ENCODE measurements at regions of chr20 and their contacts with region 1.

Region 1: DNA sequence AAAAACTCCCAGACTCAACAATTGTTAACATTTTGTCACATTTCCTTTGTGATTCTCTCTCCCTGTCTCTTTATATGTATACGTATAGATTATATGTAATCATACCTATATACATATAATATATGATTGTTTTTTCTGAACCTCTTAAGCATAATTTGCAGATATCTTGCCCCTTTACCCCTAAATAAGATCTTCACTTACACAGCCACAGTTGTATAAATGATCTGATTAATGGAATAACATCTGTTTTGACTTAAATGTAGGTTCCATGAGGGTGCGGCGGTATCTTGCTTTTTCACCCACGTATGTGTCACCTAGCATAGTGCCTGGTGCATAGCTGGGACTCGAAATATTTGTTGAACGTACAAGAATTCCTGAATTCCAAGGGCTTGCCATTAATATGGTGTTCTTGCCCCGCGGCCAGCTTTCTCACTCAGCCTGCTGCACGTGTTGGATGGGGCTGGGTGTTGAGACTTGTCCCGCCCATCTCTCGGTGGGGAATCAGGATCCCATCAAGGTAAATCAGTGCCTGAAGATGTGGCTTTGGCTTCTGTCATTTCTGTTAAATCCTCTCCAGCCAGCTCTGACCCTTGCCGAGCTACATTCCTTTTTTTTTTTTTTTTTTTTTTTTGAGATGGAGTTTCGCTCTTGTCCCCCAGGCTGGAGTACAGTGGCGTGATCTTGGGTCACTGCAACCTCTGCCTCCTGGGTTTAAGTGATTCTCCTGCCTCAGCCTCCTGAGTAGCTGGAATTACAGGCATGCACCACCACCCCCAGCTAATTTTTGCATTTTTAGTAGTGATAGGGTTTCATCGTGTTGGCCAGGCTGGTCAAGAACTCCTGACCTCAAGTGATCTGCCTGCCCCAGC is 10.3 kb upstream of the MANBAL start:
- DNase-seq: no peak
- ATAC-seq: no peak
- H3K4me3 ChIP-seq: no peak overlapping the region
- H3K4me3 Mint-ChIP-seq: no peak overlapping the region
- H3K27ac ChIP-seq: no peak overlapping the region
- H3K27ac Mint-ChIP-seq: no peak overlapping the region
- H3K4me1 ChIP-seq: peaks cover 0 to 6% of the 10 kb centered on the region in 2 experiments
- H3K4me1 Mint-ChIP-seq: peaks cover 7 to 11% (median 11%) of the 10 kb centered on the region in 3 donors
- H3K27me3 ChIP-seq: peaks cover 0 to 16% of the 10 kb centered on the region in 2 experiments
- H3K27me3 Mint-ChIP-seq: peaks cover 0 to 3% of the 10 kb centered on the region in 2 donors

Region 2: DNA sequence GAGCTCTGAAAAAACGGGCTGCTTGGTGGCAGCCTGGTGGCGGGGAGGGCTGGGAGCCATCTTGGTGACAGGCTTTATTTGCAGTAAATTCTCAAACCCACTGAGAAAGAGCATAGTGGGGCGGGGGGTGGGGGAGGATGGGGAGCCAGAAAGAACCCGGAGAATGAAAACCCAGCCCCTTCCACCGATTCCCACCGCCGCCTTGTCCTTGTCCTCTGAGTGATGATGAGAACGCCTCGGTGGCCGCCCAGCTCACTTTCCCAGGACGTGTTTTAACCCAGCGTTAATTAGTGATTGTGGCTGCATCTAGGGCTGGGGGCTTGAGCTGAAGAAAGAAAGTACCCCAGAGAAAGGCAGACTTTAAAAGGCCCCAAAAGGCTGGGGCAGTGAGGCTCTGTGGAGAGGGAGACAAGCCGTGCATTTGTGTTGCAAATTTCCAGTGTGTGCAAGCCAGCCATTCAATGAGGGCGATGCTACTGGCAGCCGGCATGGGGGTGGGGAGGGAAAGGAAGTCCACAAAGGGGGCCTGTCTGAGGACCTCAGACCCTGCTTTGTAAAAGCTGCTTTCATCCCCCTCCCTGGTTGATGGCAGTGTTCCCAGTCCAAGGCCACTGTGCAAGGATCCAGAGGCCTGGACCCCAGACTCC is 11.4 kb before region 1 on chr20:
- CTCF ChIA-PET with region 1: interaction called, 4 to 6 read pairs
- POLR2A ChIA-PET with region 1: interaction called in 1 of 2 experiments, 12 read pairs
- DNase-seq: no peak
- ATAC-seq: no peak
- H3K4me3 ChIP-seq: no peak overlapping the region
- H3K4me3 Mint-ChIP-seq: no peak overlapping the region
- H3K27ac ChIP-seq: no peak overlapping the region
- H3K27ac Mint-ChIP-seq: no peak overlapping the region
- H3K4me1 ChIP-seq: no peaks in the 10 kb centered on the region
- H3K4me1 Mint-ChIP-seq: peaks cover 0 to 5% (median 0%) of the 10 kb centered on the region in 3 donors
- H3K27me3 ChIP-seq: peaks cover 0 to 5% of the 10 kb centered on the region in 2 experiments
- H3K27me3 Mint-ChIP-seq: peaks cover 5 to 7% of the 10 kb centered on the region in 2 donors